Upper lobe of right lung (tissue), 1 donor: ENCODE measurements at regions of chr1 and their contacts with region 1.

Region 1: DNA sequence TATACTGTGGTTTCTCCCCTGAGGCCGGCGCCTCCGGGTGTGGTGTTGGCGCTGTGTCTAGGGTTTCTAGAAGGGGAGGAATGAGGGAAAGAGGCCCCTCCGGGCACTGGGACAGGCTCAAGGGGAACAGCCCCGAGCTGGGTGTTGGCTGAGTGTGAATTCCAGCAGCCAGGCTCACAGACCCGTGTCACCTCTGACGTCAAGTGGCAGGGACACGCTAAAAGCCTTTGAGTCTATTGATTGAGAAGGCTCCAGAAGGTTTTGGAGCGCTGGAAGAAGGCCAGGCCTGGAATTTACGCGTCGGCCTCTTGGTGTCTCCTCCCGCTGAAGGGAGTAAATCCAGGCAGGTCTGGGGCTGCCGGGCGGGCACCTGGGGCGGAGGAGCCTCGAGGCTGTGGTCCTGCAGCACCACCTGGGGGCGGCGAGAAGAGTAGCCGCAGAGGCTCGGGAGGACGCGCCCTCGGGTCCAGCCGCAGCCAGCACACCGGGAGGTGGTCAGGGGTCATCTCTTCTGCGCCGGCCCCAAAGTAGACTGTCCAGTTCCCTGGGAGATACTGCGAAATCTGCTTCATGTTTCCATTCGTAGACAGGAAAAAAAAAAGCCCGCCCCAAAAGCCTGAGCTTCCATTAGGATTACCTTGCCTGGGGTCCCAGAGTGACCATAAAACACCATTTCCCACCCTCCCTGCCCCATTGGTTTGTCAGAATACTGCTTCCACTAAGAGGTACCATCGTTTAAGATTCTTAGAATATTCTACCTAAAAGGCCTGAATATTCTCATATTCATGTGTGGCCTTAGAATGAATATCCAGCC is 61.7 kb downstream of the TLR5 start:
- DNase-seq: peak; percentile 93
- ATAC-seq: peak; percentile 95
- H3K4me3 ChIP-seq: peak overlapping the region; percentile 45
- H3K27ac ChIP-seq: peak overlapping the region; percentile 73
- H3K4me1 ChIP-seq: peaks cover 4% of the 10 kb centered on the region
- H3K27me3 ChIP-seq: no peaks in the 10 kb centered on the region
- CTCF ChIP-seq: peak; percentile 94

Region 2: DNA sequence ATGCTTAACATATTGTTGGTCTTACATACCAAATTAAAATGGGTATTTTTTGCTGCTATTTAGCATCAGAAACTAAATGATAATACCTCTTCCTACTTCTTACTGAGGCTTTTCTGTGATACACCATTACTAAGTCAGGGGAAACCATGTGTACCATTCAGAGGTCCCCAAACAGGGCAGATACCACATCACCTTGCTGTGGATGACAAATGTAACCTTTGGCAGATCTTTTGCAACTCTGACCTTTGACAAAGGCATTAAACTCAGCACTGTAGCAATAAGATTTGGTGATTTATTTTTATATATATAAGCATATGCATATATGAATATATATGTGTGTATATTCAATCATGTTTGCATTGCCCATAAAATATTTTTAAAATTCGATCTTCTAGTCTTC is 341.5 kb before region 1 on chr1:
- intact Hi-C with region 1: loop called (anchors 5 kb)
- DNase-seq: no peak
- ATAC-seq: no peak
- H3K4me3 ChIP-seq: no peak overlapping the region
- H3K27ac ChIP-seq: no peak overlapping the region
- H3K4me1 ChIP-seq: no peaks in the 10 kb centered on the region
- H3K27me3 ChIP-seq: no peaks in the 10 kb centered on the region
- CTCF ChIP-seq: no peak

Region 3: GRCh38 chr1:222792744-222793143 is 288.6 kb before region 1 on chr1:
- intact Hi-C with region 1: loop called (anchors 10 kb)
- DNase-seq: no peak
- ATAC-seq: peak; percentile 34
- H3K4me3 ChIP-seq: no peak overlapping the region
- H3K27ac ChIP-seq: no peak overlapping the region
- H3K4me1 ChIP-seq: no peaks in the 10 kb centered on the region
- H3K27me3 ChIP-seq: no peaks in the 10 kb centered on the region
- CTCF ChIP-seq: peak; percentile 59